ENCODE measurements at regions of chr9 and their contacts with region 1.

Region 1: DNA sequence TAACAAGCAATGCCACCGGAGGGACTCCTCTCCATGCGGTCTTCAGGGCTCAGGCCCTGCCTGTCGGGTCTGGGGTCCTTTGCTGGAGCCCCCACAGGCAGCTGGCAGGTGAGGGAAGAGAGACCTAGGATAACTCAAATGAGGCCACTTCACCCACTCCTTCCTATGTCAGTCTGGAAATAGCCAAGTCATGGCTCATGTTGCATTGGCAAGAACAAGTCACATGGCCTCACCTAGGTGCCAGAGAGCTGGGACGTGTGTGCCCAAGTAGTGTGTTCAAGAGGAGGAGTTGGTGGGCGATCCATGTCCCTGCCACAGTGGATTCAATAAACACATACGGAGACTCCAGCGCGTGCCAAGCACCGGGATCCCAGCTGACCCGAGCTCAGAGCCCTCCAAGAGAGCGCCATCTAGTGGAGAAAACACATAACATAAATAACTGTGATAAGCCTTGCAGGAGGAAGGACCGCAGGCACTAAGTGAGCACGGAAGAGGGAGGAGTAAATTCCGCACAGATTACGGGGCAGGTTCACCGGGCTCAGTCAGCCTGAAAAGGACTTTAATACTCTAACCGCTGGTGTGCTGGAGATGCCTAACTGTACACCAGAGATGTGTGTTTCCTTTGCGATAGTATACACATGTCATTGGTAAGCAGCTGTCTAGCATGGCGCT is 580.8 kb downstream of the CCDC171 start:
- H3K4me3 Mint-ChIP-seq: no peak overlapping the region
- H3K27ac Mint-ChIP-seq: no peak overlapping the region
- H3K4me1 Mint-ChIP-seq: no peaks in the 10 kb centered on the region
- H3K27me3 Mint-ChIP-seq: no peaks in the 10 kb centered on the region

Region 2: GRCh38 chr9:15357050-15357653 is 776.5 kb before region 1 on chr9:
- intact Hi-C with region 1: no loop called
- H3K4me3 Mint-ChIP-seq: no peak overlapping the region
- H3K27ac Mint-ChIP-seq: no peak overlapping the region
- H3K4me1 Mint-ChIP-seq: no peaks in the 10 kb centered on the region
- H3K27me3 Mint-ChIP-seq: no peaks in the 10 kb centered on the region

Region 3: DNA sequence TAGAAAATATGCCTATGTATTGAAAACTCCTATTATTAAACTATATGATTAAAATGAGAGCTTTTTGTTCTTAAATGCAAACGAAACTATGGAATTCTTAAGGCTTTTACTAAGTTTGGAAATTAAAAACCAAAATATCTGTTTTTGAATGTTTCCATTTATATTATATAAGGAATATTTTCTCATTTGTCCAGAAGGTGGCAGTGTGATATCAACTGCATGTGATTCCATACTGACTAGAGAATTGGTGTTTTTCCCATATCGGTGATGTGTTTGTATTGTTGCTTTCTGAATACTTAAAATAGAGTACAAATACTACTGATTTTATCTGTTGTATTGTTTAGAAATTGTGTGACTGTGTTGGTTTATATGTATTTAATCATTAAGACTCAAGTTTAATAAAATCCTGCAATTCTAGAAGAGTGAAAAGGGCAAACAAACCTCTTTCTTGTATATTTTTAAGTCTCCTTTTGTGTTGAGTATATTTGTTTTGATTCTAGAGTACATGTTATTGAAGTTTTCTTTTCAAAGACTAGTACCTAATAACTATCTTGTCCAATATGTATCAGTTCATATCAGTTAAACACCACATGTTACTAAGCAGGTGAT is 260.0 kb before region 1 on chr9:
- intact Hi-C with region 1: loop called (anchors 10 kb)
- H3K4me3 Mint-ChIP-seq: no peak overlapping the region
- H3K27ac Mint-ChIP-seq: no peak overlapping the region
- H3K4me1 Mint-ChIP-seq: no peaks in the 10 kb centered on the region
- H3K27me3 Mint-ChIP-seq: no peaks in the 10 kb centered on the region

Measured in dendritic cell treated with granulocyte-macrophage colony-stimulating factor and Interleukin-4, amounts not matched to agents 40 ng/mL and 50 ng/mL, for 4 days (primary cell).